GM10248 (cell line): ENCODE measurements at regions of chr5 and their contacts with region 1.

Region 1: DNA sequence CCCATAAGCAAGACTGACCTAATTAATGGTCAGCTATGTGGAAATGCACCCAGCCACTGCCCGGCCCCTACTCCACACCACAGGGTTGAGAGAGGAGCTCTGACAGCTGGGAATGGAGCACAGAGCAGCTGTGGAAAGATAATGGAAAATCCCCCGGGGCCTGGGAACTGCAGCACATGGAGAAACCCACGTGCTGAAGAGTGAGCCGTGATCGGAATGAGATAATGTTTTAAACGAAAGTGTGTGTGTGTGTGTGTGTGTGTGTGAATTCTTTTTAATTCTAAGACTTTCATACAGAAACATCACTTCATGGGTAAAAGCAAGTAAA is 13.1 kb upstream of the SLC12A7 start:
- DNase-seq: no peak
- CTCF ChIP-seq: no peak

Region 2: DNA sequence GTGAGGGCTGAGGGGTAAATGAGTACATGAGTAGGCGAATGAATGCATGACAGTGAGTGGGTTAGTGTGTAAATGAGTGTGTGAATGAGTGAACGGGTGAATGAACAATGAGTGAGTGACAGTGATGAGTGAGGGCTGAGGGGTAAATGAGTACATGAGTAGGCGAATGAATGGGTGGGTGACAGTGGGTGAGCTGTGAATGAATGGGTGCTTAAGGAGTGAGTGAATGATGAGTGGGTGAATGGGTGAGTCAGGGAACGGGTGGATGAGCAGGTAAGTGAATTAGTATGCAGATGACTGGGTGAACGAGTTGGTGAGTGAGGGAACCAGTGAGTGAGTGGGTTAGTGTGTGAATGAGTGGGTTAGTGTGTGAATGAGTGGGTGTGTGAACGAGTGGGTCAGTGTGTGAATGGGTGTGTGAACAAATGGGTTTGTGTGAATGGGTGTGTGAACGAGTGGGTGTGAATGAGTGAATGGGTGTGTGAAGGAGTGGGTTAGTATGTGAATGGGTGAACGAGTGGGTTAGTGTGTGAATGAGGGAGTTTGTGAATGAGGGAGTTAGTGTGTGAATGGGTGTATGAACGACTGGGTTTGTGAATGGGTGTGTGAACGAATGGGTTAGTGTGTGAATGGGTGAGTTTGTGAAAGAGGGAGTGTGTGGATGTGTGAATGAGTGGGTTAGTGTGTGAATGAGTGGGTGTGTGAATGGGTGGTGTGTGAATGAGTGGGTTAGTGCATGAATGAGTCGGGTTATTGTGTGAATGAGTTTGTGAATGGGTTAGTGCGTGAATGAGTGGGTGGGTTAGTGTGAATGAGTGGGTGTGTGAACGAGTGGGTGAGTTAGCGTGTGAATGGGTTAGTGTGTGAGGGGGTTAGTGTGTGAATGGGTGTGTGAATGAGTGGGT is 83.5 kb before region 1 on chr5:
- CTCF ChIA-PET with region 1: no interaction called
- POLR2A ChIA-PET with region 1: no interaction called
- DNase-seq: no peak
- CTCF ChIP-seq: no peak

Region 3: GRCh38 chr5:1140171-1140817 is 15.3 kb after region 1 on chr5:
- CTCF ChIA-PET with region 1: interaction called, 12 read pairs
- POLR2A ChIA-PET with region 1: no interaction called
- DNase-seq: peak; percentile 87
- CTCF ChIP-seq: peak; percentile 77

Region 4: DNA sequence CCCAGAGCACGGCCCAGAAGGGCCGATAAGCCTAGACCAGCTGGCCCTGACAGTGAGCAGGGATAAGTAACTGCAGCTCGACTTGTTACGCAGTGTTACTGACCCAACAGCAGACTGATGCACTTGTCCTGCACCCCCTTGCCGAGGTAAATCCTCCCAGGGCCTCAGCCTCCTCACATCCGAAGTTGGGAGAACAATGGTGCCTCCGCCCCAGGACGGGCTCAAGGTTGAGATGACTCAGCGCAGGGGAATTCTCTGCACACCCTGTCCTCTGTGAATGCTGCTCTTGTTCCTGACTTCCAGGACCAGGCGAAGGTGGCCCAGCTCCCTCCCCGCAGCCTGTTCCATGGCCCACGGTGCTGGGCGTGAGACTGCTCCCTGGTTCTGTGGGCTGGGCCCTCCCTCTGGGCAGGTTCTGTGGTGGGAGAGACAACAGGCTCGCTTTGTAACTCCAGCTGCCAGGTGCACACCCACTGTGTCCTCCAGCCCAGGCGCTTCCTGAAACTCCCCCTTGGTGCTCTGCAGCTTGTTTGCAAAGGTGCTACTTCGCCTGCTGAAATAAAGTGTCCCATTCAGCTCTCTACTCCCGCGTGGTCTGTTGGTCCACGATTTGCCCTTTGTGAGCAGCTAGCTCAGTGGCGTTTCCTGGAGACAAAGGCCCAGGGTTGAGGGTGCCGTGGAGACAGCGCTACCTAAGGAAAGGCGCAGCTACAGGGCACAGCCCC is 36.3 kb after region 1 on chr5:
- CTCF ChIA-PET with region 1: no interaction called
- POLR2A ChIA-PET with region 1: no interaction called
- DNase-seq: no peak
- CTCF ChIP-seq: no peak